Head of caudate nucleus (tissue), 42 donors: ENCODE measurements at regions of chr1 and their contacts with region 1.

Region 1: DNA sequence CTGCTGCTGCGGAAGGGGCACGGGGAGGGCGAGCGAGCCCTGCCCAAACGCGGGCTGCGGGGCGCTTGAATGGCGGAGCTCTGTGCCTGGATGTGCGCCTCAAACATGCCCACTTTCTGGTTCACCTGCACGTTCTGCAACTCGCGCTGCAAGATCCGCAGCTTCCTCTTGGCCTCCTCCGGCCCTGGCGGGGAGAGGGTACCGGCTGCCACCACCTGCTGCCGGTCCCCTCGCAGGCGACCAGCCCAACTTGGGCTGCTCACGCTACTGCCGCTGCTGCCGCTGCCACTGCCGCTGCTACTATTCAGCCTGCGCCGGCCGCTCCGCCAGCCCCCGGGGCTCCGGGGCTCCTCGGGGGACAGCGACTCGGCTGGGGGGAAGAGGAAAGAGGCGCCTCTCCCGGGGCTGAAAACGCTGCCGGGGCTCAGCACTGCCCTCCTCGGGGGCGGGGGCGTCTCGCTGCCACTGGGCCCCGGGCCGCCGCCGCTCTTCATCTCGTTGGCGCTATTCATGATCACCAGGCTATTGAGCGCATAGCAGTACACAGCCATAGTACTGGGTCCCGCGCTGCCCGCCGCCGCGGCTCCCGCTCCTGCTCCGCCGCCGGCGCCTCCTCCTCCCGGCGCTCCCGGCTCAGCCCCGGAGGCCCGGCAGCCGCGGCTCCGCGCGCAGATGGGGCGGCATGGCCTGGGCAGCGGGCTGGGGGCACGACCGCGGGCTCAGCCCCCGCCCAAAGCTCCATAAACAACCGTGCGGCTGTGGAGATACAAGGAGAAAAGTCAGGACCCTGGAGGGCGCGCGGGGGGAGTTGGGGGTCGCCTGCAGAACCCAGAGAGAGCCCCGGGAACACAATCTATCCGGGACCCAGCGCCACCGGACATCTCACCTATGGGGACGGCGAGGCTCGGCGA is 1.9 kb downstream of the ITPKB start:
- DNase-seq: peak; percentile 45 to 91 (median 74)

Region 2: DNA sequence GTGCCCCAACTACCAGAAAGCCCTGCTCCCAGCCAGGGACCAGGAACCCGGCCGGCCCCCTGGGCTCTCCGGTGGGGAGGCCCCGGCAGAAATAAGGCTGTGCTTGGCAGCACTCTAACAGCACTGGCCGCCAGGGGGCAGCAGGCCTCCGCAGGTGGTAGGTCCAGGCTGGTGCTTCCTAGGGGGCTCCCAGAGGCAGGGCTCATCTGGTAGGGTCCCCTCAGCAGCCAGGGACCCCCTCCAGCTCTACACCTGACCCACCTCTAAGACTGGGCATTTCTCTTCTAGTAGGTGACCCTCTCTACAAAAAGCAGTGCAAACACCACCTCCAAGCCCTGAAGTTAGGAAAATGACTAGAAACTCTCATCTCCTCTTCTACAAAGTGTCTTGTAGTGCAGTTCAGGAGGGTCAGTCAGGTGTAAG is 103.0 kb before region 1 on chr1:
- intact Hi-C with region 1: loop called (anchors 5 kb)
- DNase-seq: peak; percentile 64 to 96 (median 89)

Region 3: DNA sequence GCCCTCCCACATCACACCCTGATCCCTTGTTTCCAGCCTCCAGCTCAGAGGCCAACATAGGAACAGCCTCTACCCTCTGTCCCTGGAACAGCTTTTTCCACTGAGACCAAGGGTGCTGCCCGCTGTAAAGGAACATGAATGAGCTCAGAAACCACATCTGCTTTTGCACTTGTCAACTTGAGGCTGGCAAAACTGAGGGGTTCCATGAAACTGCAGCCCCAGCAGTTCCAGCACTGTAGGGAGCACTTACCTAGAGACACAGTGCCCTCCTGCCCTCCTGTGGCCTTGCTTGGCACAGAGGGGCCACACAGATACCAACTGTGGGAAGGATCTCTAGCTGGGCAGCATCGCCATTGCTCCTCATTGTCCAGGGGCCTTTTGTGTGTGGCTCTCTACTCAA is 49.7 kb before region 1 on chr1:
- intact Hi-C with region 1: no loop called
- DNase-seq: peak in 12 of 42 donors; percentile 32 to 74 (median 44)

Region 4: GRCh38 chr1:226702957-226703831 is 34.0 kb before region 1 on chr1:
- intact Hi-C with region 1: loop called (anchors 2 kb)
- DNase-seq: peak in 41 of 42 donors; percentile 47 to 91 (median 82)

Region 5: GRCh38 chr1:226820941-226821718 is 84.0 kb after region 1 on chr1:
- intact Hi-C with region 1: loop called (anchors 5 kb)
- DNase-seq: peak in 28 of 42 donors; percentile 15 to 80 (median 40)

Region 6: GRCh38 chr1:226940029-226940805 is 203.1 kb after region 1 on chr1 and contains the start of gene COQ8A:
- intact Hi-C with region 1: loop called (anchors 5 kb)
- DNase-seq: peak; percentile 98 to 100 (median 100)